ENCODE measurements at regions of chr17 and their contacts with region 1.

Region 1: GRCh38 chr17:80873284-80873951 is 118.2 kb upstream of the CHMP6 start:
- DNase-seq: peak; percentile 68
- ATAC-seq: peak; percentile 91
- H3K4me3 Mint-ChIP-seq: peak overlapping the region; percentile 14; the same call in 1 of the 2 replicates
- H3K27ac Mint-ChIP-seq: peak overlapping the region; percentile 95
- H3K4me1 Mint-ChIP-seq: peaks cover 32% of the 10 kb centered on the region
- H3K27me3 Mint-ChIP-seq: no peaks in the 10 kb centered on the region
- CTCF ChIP-seq: no peak

Region 2: DNA sequence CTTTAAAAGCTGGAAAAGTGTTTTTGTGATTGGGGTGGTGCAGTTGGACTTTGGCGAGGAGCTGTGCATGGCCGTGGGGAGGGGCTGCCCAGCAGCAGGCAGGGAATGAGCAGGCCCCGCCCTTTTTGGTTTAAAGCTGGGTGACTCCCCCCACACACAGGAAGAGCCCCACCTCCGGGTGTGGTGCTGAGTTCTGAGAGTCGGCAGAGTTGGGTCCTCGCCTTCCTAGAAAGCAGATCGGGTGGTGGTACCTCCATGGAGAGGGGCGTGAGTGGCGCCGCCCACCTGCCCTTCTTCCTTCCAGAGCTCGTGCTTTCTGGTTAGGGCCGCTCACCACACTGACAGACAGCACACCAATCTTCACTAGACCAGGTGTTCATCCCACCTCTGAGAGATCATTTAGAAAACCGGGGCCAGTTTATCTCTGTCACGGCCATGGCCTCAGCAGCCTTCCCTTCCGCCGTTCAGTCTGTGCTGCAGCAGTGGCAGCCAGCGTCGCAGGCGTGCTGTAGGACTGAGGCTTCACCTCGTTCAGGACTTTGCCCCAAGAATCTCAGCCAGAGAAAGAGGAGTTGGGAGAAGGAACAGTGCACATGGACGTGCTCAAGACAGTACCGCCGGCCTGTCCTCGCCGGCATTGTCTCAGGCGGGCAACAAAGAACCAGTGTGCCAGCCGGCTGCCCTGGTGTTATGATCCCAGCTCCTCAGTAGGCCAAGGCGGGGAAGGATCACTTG is 25.8 kb before region 1 on chr17:
- CTCF ChIA-PET with region 1: no interaction called
- POLR2A ChIA-PET with region 1: no interaction called
- DNase-seq: no peak
- ATAC-seq: no peak
- H3K4me3 Mint-ChIP-seq: no peak overlapping the region
- H3K27ac Mint-ChIP-seq: no peak overlapping the region; the same call in 1 of the 2 replicates
- H3K4me1 Mint-ChIP-seq: peaks cover 13% of the 10 kb centered on the region
- H3K27me3 Mint-ChIP-seq: no peaks in the 10 kb centered on the region
- CTCF ChIP-seq: no peak

Region 3: GRCh38 chr17:80859324-80860150 is 13.9 kb before region 1 on chr17:
- CTCF ChIA-PET with region 1: interaction called, 12 read pairs
- POLR2A ChIA-PET with region 1: no interaction called
- DNase-seq: no peak
- ATAC-seq: peak; percentile 27
- H3K4me3 Mint-ChIP-seq: no peak overlapping the region; the same call in 1 of the 2 replicates
- H3K27ac Mint-ChIP-seq: peak overlapping the region; percentile 95
- H3K4me1 Mint-ChIP-seq: peaks cover 28% of the 10 kb centered on the region
- H3K27me3 Mint-ChIP-seq: no peaks in the 10 kb centered on the region
- CTCF ChIP-seq: no peak

Region 4: GRCh38 chr17:80938556-80938955 is 65.1 kb after region 1 on chr17:
- CTCF ChIA-PET with region 1: no interaction called
- POLR2A ChIA-PET with region 1: no interaction called
- DNase-seq: no peak
- ATAC-seq: no peak
- H3K4me3 Mint-ChIP-seq: no peak overlapping the region
- H3K27ac Mint-ChIP-seq: peak overlapping the region; percentile 43
- H3K4me1 Mint-ChIP-seq: no peaks in the 10 kb centered on the region
- H3K27me3 Mint-ChIP-seq: no peaks in the 10 kb centered on the region
- CTCF ChIP-seq: no peak

Measured in WTC11 (cell line).